PC-9 (cell line): ENCODE measurements at regions of chr10 and their contacts with region 1.

Region 1: DNA sequence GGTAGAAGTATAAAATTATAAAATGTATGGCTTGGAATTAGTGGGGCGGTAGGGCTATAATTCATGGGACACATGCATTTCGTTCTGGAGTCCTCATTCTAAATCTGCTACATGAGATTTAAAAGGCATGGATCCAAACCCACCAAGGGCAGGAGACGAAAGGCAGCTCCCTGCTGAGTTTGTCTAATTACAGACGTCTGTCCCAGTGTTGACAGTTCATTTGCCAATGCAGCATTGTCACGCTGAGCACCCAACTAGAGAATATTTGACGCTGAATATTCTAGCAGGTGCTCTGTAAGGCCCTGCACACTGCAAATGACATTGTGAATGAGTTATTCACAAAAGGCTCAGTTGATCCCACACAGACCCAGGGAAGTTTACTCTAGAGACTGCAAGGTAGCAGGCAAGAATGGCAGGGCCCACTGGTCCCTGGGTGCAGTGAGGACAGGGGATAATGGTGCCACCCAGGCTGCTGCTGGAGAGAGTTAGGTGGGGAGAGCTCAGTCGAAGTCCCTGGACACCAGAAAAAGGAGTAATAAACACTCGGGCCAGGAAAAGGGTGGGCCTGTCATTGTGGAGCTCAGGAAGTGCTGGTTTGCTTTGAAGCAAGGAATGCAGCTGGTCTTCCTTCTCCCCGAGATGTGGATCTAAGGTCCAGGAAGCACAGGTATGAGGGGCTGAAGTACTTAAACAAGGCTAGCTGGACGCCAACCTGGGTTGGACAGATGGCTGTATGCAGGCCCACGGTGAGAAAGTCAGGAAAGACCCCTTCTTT is 75.0 kb upstream of the JCAD start:
- DNase-seq: no peak
- H3K4me3 ChIP-seq: no peak overlapping the region
- H3K27ac ChIP-seq: no peak overlapping the region
- H3K4me1 ChIP-seq: no peaks in the 10 kb centered on the region
- H3K27me3 ChIP-seq: no peaks in the 10 kb centered on the region
- CTCF ChIP-seq: no peak

Region 2: GRCh38 chr10:29535012-29535777 is 599.2 kb before region 1 on chr10:
- CTCF ChIA-PET with region 1: interaction called, 15 read pairs
- POLR2A ChIA-PET with region 1: no interaction called
- intact Hi-C with region 1: no loop called
- DNase-seq: peak in 1 of 2 experiments; percentile 69
- H3K4me3 ChIP-seq: no peak overlapping the region
- H3K27ac ChIP-seq: 0 out of 2 replicates have a peak overlapping the region, but pooled peaks have one; percentile 9
- H3K4me1 ChIP-seq: no peaks in the 10 kb centered on the region
- H3K27me3 ChIP-seq: no peaks in the 10 kb centered on the region
- CTCF ChIP-seq: peak; percentile 25; the same call in 1 of the 2 replicates

Region 3: GRCh38 chr10:29811751-29812449 is 322.5 kb before region 1 on chr10:
- CTCF ChIA-PET with region 1: no interaction called
- POLR2A ChIA-PET with region 1: no interaction called
- intact Hi-C with region 1: no loop called
- DNase-seq: peak; percentile 78 to 94
- H3K4me3 ChIP-seq: peak overlapping the region; percentile 33; the same call in 1 of the 2 replicates
- H3K27ac ChIP-seq: peak overlapping the region; percentile 99
- H3K4me1 ChIP-seq: peaks cover 58% of the 10 kb centered on the region
- H3K27me3 ChIP-seq: no peaks in the 10 kb centered on the region
- CTCF ChIP-seq: no peak